ENCODE measurements at regions of chr14 and their contacts with region 1.

Region 1: DNA sequence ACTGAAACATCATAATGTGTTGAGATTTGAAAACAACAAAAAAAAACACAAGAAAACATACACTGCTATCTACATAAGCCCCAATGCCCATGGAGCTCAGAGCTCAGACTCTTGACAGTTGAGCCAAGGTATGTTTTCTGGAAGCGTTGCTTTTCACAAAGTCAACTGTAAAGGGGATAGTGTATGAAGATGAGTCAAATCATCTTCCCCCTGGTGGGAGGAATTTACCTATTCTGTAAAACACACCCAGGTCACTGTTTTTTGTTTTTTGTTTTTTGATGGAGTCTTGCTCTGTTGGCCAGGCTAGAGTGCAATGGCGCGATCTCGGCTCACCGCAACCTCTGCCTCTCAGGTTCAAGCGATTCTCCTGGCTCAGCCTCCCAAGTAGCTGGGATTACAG is 361.4 kb upstream of the DIO2 start:
- DNase-seq: no peak
- ATAC-seq: no peak
- H3K4me3 ChIP-seq: no peak overlapping the region
- H3K27ac ChIP-seq: no peak overlapping the region
- H3K4me1 ChIP-seq: peaks cover 51% of the 10 kb centered on the region
- H3K27me3 ChIP-seq: no peaks in the 10 kb centered on the region
- CTCF ChIP-seq: no peak

Region 2: DNA sequence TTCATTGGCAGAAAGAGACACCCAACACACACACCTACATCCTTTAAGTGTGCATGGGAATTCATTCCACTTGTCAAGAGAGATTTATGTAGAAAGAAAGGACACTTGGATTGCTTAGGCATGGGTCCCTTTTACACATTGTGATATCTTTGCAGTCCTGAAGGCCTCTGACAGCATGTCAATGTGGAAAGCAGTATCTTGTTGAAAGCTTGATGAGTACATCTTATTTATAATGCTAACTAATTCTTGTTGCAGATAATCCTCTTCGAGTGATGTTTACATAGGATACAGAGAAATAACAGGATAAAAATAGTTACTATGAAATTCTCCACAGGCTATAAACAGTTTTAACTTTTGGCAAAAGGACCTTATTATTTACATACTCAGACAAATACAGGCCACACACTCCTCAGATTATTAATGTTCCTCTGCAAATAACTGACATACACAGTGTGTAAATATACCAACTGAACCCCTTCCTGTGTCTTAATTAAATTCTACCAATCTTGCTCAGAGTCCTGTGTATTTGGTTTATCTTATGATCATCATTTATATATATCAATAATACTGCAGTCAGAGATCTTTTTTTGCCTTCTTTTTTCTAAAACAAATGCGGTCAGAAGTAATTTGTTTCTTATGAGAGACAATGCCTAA is 249.5 kb before region 1 on chr14:
- CTCF ChIA-PET with region 1: no interaction called
- POLR2A ChIA-PET with region 1: no interaction called
- intact Hi-C with region 1: loop called (anchors 1 kb)
- DNase-seq: no peak
- ATAC-seq: peak; percentile 93
- H3K4me3 ChIP-seq: no peak overlapping the region
- H3K27ac ChIP-seq: no peak overlapping the region
- H3K4me1 ChIP-seq: peaks cover 16% of the 10 kb centered on the region; the same call in 1 of the 2 replicates
- H3K27me3 ChIP-seq: no peaks in the 10 kb centered on the region
- CTCF ChIP-seq: no peak

Region 3: DNA sequence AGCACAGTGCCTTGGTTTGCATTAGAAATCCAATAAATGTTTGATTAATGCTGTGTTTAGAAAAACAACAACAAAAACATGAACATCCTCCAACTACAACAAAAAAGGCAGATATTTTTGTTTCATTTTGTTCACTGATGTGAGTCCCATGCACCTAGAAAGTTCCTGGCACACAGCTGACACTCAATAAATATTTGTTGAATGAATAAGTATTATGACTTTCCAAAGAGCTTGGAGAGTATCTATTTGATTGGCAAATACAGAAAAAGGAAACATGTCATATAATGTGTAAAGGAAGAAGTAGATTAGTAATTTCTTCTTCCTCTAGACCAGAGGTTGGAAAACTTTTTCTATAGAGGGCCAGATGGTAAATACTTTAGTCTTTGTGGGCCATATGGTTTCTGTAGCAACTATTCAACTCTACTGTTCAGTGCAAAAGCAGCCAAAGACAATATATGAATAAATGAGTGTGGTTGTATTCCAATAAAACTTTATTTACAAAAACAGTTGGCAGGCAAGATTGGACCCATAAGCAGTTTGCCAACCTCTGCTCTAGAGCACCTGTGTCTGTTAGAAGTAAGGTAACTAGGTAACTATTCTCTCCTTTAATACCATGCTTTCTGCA is 49.0 kb before region 1 on chr14:
- CTCF ChIA-PET with region 1: no interaction called
- POLR2A ChIA-PET with region 1: no interaction called
- intact Hi-C with region 1: loop called (anchors 1 kb)
- DNase-seq: peak; percentile 87
- ATAC-seq: peak; percentile 86
- H3K4me3 ChIP-seq: peak overlapping the region; percentile 20; the same call in 1 of the 2 replicates
- H3K27ac ChIP-seq: peak overlapping the region; percentile 76
- H3K4me1 ChIP-seq: peaks cover 29% of the 10 kb centered on the region
- H3K27me3 ChIP-seq: no peaks in the 10 kb centered on the region
- CTCF ChIP-seq: no peak

Region 4: GRCh38 chr14:80587075-80587724 is 14.5 kb after region 1 on chr14:
- CTCF ChIA-PET with region 1: no interaction called
- POLR2A ChIA-PET with region 1: interaction called, 5 read pairs
- intact Hi-C with region 1: loop called (anchors 2 kb)
- DNase-seq: peak; percentile 66
- ATAC-seq: peak; percentile 35; the same call in 1 of the 2 replicates
- H3K4me3 ChIP-seq: no peak overlapping the region
- H3K27ac ChIP-seq: peak overlapping the region; percentile 9; the same call in 1 of the 2 replicates
- H3K4me1 ChIP-seq: peaks cover 36% of the 10 kb centered on the region
- H3K27me3 ChIP-seq: no peaks in the 10 kb centered on the region
- CTCF ChIP-seq: peak; percentile 83

Region 5: GRCh38 chr14:80607430-80608190 is 34.9 kb after region 1 on chr14:
- CTCF ChIA-PET with region 1: no interaction called
- POLR2A ChIA-PET with region 1: no interaction called
- intact Hi-C with region 1: loop called (anchors 2 kb)
- DNase-seq: no peak
- ATAC-seq: no peak
- H3K4me3 ChIP-seq: no peak overlapping the region
- H3K27ac ChIP-seq: no peak overlapping the region
- H3K4me1 ChIP-seq: peaks cover 23% of the 10 kb centered on the region
- H3K27me3 ChIP-seq: no peaks in the 10 kb centered on the region
- CTCF ChIP-seq: no peak

Region 6: GRCh38 chr14:80638620-80639515 is 66.2 kb after region 1 on chr14:
- CTCF ChIA-PET with region 1: no interaction called
- POLR2A ChIA-PET with region 1: interaction called, 5 read pairs
- intact Hi-C with region 1: loop called (anchors 2 kb)
- DNase-seq: peak; percentile 96
- ATAC-seq: peak; percentile 98
- H3K4me3 ChIP-seq: 0 out of 2 replicates have a peak overlapping the region, but pooled peaks have one; percentile 2
- H3K27ac ChIP-seq: peak overlapping the region; percentile 87
- H3K4me1 ChIP-seq: peaks cover 46% of the 10 kb centered on the region
- H3K27me3 ChIP-seq: no peaks in the 10 kb centered on the region
- CTCF ChIP-seq: no peak